ENCODE measurements at regions of chr2 and their contacts with region 1.

Region 1: GRCh38 chr2:10434886-10435819 is 13.0 kb downstream of the ODC1 start:
- DNase-seq: peak; percentile 87 to 91 (median 90)
- ATAC-seq: peak; percentile 88
- H3K4me3 ChIP-seq: no peak overlapping the region
- H3K27ac ChIP-seq: no peak overlapping the region
- H3K4me1 ChIP-seq: peaks cover 9 to 51% of the 10 kb centered on the region in 2 experiments
- H3K27me3 ChIP-seq: no peaks in the 10 kb centered on the region
- CTCF ChIP-seq: peak; percentile 95 to 97 (median 97)
- EP300 ChIP-seq: peak; percentile 51; the same call in 1 of the 2 replicates
- POLR2A ChIP-seq: no peak
- RAD21 ChIP-seq: peak; percentile 98 to 99

Region 2: GRCh38 chr2:10072656-10073480 is 362.3 kb before region 1 on chr2:
- CTCF ChIA-PET with region 1: no interaction called
- POLR2A ChIA-PET with region 1: interaction called, 6 read pairs
- in situ Hi-C with region 1: no loop called
- intact Hi-C with region 1: loop called (anchors 1 kb)
- DNase-seq: peak; percentile 82 to 90 (median 84)
- ATAC-seq: peak; percentile 97
- H3K4me3 ChIP-seq: no peak overlapping the region
- H3K27ac ChIP-seq: no peak overlapping the region
- H3K4me1 ChIP-seq: peaks cover 2 to 11% of the 10 kb centered on the region in 2 experiments; a peak in 3 of 5 replicates
- H3K27me3 ChIP-seq: peaks cover 30 to 40% of the 10 kb centered on the region in 2 experiments
- CTCF ChIP-seq: peak; percentile 92 to 93 (median 93)
- EP300 ChIP-seq: no peak; the same call in 1 of the 2 replicates
- POLR2A ChIP-seq: no peak
- RAD21 ChIP-seq: peak; percentile 77 to 89

Region 3: DNA sequence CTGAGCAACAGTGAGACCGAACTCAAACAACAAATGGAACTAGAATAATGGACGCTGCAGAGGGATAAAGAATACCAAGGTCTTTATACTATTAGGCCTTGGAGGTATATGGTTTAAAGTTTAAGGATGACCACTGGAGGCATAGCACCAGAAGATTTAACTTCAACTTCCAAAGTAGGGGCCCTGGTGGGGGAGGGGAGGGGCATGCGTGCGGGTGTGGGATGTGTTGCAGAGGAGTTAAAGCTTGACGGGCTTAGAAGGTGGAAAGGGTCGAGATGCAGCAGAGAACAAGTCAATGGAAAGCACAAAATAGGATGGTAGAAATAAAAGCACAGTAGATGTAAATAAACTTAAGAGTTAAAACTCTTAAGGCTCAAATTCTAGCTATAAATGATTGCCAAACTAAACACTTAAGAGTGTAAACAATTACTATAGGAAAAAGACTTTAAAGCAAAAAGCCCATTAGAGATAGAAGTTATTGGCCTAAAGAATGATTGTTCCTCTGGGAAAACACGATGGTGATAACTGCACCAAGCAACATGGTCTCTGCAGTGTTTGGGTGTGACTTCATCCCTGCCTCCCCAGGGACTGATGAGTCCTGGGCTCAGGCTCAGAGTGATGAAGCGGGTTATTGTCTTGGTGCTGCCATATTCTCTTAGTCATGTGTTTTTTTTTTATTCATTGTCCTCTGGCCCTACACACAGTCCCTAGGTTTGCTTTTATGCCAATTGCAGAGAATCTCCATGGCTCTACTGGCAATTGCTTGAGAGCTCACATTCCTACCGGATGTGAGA is 299.7 kb before region 1 on chr2:
- CTCF ChIA-PET with region 1: no interaction called
- POLR2A ChIA-PET with region 1: interaction called, 14 read pairs
- in situ Hi-C with region 1: no loop called
- intact Hi-C with region 1: no loop called
- DNase-seq: peak; percentile 38 to 53 (median 48)
- ATAC-seq: peak; percentile 33
- H3K4me3 ChIP-seq: no peak overlapping the region
- H3K27ac ChIP-seq: no peak overlapping the region
- H3K4me1 ChIP-seq: peaks cover 15 to 28% of the 10 kb centered on the region in 2 experiments; a peak in 4 of 5 replicates
- H3K27me3 ChIP-seq: no peaks in the 10 kb centered on the region
- CTCF ChIP-seq: peak in 1 of 3 experiments; percentile 2; a peak in 1 of 6 replicates
- EP300 ChIP-seq: no peak
- POLR2A ChIP-seq: peak; percentile 67
- RAD21 ChIP-seq: no peak

Region 4: DNA sequence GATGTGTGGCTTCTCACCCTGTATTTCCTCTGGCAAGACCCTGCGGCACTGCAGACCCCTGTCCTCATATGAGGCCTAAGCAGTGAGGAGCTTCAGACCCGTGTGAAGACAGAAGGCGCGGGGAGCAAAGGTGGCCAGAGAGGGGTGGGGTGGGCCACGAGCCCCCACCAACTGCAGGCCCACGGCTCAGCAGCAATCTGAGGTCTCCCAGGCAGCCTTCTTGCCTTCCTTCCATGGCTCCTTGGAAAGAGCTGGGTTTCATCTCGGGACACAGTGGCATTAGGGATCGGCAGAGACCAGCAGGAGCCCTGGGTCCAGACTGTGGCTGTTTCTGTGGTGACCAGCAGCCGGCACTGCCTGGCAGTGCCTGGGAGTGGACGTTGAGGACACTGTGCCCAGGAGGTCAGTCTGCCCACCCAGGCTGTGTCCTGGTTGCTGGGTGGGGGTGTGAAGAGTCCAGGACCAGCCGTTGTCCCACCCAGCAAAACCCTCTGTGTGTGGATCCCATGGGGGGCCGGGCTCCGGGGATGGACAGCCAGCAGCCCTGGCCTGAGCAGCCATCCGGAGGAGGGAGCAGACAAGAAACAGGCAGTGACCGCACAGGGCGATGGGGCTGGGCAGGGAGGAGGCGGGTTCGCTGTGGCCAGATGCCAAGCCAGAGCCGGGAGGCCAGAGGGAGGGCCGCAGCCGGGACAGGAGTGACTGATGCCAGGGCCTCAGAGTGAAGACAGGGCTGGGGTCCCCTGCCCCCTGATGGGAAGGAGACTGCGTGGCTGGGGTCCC is 238.9 kb before region 1 on chr2:
- CTCF ChIA-PET with region 1: no interaction called
- POLR2A ChIA-PET with region 1: no interaction called
- in situ Hi-C with region 1: no loop called
- intact Hi-C with region 1: no loop called
- DNase-seq: no peak
- ATAC-seq: no peak
- H3K4me3 ChIP-seq: no peak overlapping the region
- H3K27ac ChIP-seq: no peak overlapping the region
- H3K4me1 ChIP-seq: peaks cover 0 to 4% of the 10 kb centered on the region in 2 experiments; a peak in 2 of 5 replicates
- H3K27me3 ChIP-seq: no peaks in the 10 kb centered on the region
- CTCF ChIP-seq: no peak
- EP300 ChIP-seq: no peak
- POLR2A ChIP-seq: no peak
- RAD21 ChIP-seq: no peak

Region 5: DNA sequence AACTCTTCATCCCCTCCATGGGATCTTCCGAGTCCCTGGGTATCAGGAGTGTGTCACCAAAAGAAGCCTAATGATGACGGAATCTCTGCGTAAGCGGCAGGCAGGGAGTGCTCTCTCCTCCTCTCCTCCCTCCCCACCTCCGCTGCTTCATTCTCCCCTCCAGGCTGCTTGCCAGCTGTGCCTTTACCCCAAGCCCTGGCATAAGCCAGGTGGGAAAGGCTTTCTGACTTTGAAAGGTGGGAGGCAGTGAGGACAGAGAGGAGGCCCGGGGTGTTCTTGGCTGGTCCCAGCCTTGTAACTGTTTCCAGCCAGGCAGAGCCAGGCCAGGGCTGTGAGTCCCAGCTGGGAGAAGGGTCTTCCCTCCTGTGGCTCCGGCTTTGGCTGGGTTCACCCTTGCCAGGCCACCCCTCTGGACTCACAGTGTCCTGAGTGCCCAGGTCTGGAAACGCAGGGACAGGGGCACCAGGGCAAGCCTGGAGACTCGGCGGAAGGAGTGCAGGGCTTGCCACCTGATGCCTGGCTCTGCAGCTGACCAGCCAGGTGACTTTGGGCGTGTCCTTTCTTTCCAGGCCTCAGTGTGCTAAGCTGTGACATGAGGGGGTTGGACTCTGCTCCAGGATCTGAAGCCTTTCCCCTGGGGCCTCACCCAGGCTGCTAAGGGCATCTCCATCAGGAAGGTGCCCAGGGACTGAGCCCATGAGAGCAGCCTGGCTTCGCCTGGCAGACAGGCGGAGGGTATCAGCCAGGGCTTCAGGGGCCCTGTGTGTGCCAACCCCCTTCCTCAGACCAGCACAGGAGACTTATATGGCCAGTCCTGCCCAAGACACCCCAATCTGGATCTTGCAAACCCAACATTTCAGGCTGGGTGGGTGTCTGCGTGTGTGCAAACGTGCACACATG is 165.2 kb before region 1 on chr2:
- CTCF ChIA-PET with region 1: interaction called, 15 read pairs
- POLR2A ChIA-PET with region 1: interaction called, 3 read pairs
- in situ Hi-C with region 1: no loop called
- intact Hi-C with region 1: loop called (anchors 1 kb)
- DNase-seq: no peak
- ATAC-seq: no peak
- H3K4me3 ChIP-seq: no peak overlapping the region
- H3K27ac ChIP-seq: no peak overlapping the region
- H3K4me1 ChIP-seq: peaks cover 26 to 51% of the 10 kb centered on the region in 2 experiments; a peak in 4 of 5 replicates
- H3K27me3 ChIP-seq: no peaks in the 10 kb centered on the region
- CTCF ChIP-seq: no peak
- EP300 ChIP-seq: no peak
- POLR2A ChIP-seq: no peak
- RAD21 ChIP-seq: no peak

Region 6: GRCh38 chr2:10448208-10448645 is 13.1 kb after region 1 on chr2 and contains the start of gene ODC1:
- CTCF ChIA-PET with region 1: no interaction called
- POLR2A ChIA-PET with region 1: interaction called, 47 read pairs
- in situ Hi-C with region 1: no loop called
- intact Hi-C with region 1: no loop called
- DNase-seq: peak; percentile 96 to 98 (median 97)
- ATAC-seq: peak; percentile 87
- H3K4me3 ChIP-seq: peak within 1 kb of the TSS; percentile 71
- H3K27ac ChIP-seq: peak within 1 kb of the TSS; percentile 97
- H3K4me1 ChIP-seq: peaks cover 17 to 26% of the 10 kb centered on the region in 2 experiments; a peak in 4 of 5 replicates
- H3K27me3 ChIP-seq: no peaks in the 10 kb centered on the region
- CTCF ChIP-seq: no peak
- EP300 ChIP-seq: no peak
- POLR2A ChIP-seq: no peak; the same call in 1 of the 2 replicates
- RAD21 ChIP-seq: no peak
- polyA plus RNA-seq, gene ODC1: 142 to 169 TPM